Calu3 (cell line): ENCODE measurements at regions of chr6 and their contacts with region 1.

Region 1: GRCh38 chr6:75349262-75349984 is 64.8 kb upstream of the TMEM30A start:
- DNase-seq: peak; percentile 58
- H3K4me3 Mint-ChIP-seq: peak overlapping the region; percentile 80
- H3K27ac Mint-ChIP-seq: no peak overlapping the region
- H3K4me1 Mint-ChIP-seq: peaks cover 16% of the 10 kb centered on the region
- H3K27me3 Mint-ChIP-seq: no peaks in the 10 kb centered on the region
- CTCF ChIP-seq: no peak

Region 2: GRCh38 chr6:75296811-75297779 is 52.3 kb before region 1 on chr6:
- CTCF ChIA-PET with region 1: interaction called, 4 read pairs
- intact Hi-C with region 1: loop called (anchors 1 kb)
- DNase-seq: peak; percentile 15
- H3K4me3 Mint-ChIP-seq: no peak overlapping the region
- H3K27ac Mint-ChIP-seq: no peak overlapping the region
- H3K4me1 Mint-ChIP-seq: no peaks in the 10 kb centered on the region
- H3K27me3 Mint-ChIP-seq: no peaks in the 10 kb centered on the region
- CTCF ChIP-seq: peak; percentile 68

Region 3: GRCh38 chr6:75334266-75335040 is 15.0 kb before region 1 on chr6:
- CTCF ChIA-PET with region 1: no interaction called
- intact Hi-C with region 1: no loop called
- DNase-seq: no peak
- H3K4me3 Mint-ChIP-seq: no peak overlapping the region
- H3K27ac Mint-ChIP-seq: no peak overlapping the region
- H3K4me1 Mint-ChIP-seq: no peaks in the 10 kb centered on the region
- H3K27me3 Mint-ChIP-seq: no peaks in the 10 kb centered on the region
- CTCF ChIP-seq: no peak

Region 4: GRCh38 chr6:75402296-75402695 is 52.9 kb after region 1 on chr6:
- CTCF ChIA-PET with region 1: no interaction called
- intact Hi-C with region 1: no loop called
- DNase-seq: no peak
- H3K4me3 Mint-ChIP-seq: no peak overlapping the region
- H3K27ac Mint-ChIP-seq: no peak overlapping the region
- H3K4me1 Mint-ChIP-seq: no peaks in the 10 kb centered on the region
- H3K27me3 Mint-ChIP-seq: peaks cover 15% of the 10 kb centered on the region
- CTCF ChIP-seq: no peak

Region 5: DNA sequence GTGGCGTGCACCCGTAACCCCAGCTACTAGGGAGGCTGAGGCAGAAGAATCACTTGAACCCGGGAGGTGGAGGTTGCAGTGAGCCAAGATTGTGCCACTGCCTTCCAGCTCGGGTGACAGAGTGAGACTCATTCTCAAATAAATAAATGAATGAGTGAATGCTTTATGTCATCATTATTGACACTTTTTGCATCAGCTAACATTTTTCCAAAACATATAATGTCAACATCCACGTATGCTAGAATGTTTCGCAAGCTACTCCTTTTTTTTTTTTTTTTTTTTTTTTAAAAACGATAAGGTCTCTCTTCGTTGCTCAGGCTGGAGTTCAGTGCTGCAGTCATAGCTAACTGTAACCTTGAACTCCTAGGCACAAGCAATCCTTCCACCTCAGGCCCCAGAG is 324.5 kb after region 1 on chr6:
- CTCF ChIA-PET with region 1: no interaction called
- intact Hi-C with region 1: no loop called
- DNase-seq: no peak
- H3K4me3 Mint-ChIP-seq: no peak overlapping the region
- H3K27ac Mint-ChIP-seq: no peak overlapping the region
- H3K4me1 Mint-ChIP-seq: no peaks in the 10 kb centered on the region
- H3K27me3 Mint-ChIP-seq: no peaks in the 10 kb centered on the region
- CTCF ChIP-seq: no peak